ENCODE measurements at regions of chr5 and their contacts with region 1.

Region 1: DNA sequence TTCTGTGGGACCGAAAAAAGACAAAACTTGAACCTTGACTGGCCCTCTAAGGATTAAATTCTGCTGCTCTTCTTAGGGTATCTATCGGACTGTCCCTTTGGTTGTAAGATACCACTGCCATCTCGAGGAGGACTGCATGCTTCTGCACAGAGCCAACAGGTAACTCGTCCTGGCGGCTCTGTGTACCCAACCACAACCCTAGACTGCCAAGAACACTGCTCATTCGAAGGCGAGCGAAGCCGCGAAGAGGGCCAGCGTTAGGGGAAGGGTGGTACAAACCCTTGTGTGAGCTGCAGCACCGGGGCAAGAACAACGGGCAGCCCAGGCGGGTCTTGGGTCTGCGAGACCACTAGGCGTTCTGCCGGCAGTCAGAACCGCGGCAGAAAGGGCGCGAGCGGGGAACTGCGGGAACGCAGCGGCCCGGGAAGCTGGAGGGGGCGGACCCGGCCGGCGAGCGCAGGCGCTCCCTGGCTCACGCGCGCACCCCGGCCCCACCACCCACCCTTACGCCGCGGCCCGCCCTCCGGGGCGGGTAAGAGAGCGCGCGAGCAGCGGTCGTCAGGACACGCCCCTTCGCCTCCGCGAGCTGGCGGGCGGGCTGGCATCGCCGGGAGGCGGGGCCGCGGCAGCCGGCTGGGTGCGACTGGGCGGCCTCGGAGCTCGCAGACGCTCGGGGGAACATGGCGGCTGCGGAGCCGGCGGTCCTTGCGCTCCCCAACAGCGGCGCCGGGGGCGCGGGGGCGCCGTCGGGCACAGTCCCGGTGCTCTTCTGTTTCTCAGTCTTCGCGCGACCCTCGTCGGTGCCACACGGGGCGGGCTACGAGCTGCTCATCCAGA is at the start of gene ISOC1:
- DNase-seq: peak; percentile 88 to 95 (median 93)
- H3K4me3 ChIP-seq: peak within 1 kb of the TSS; percentile 69 to 83
- H3K4me3 Mint-ChIP-seq: peak within 1 kb of the TSS; percentile 89 to 94 (median 92)
- H3K27ac ChIP-seq: peak within 1 kb of the TSS; percentile 65
- H3K27ac Mint-ChIP-seq: peak within 1 kb of the TSS; percentile 85 to 93 (median 92)
- H3K4me1 ChIP-seq: peaks cover 41% of the 10 kb centered on the region
- H3K4me1 Mint-ChIP-seq: peaks cover 22 to 39% (median 30%) of the 10 kb centered on the region in 4 donors
- H3K27me3 ChIP-seq: no peaks in the 10 kb centered on the region
- H3K27me3 Mint-ChIP-seq: peaks cover 0 to 5% of the 10 kb centered on the region in 2 donors
- total RNA-seq, gene ISOC1: 13.7 to 16.6 TPM

Region 2: DNA sequence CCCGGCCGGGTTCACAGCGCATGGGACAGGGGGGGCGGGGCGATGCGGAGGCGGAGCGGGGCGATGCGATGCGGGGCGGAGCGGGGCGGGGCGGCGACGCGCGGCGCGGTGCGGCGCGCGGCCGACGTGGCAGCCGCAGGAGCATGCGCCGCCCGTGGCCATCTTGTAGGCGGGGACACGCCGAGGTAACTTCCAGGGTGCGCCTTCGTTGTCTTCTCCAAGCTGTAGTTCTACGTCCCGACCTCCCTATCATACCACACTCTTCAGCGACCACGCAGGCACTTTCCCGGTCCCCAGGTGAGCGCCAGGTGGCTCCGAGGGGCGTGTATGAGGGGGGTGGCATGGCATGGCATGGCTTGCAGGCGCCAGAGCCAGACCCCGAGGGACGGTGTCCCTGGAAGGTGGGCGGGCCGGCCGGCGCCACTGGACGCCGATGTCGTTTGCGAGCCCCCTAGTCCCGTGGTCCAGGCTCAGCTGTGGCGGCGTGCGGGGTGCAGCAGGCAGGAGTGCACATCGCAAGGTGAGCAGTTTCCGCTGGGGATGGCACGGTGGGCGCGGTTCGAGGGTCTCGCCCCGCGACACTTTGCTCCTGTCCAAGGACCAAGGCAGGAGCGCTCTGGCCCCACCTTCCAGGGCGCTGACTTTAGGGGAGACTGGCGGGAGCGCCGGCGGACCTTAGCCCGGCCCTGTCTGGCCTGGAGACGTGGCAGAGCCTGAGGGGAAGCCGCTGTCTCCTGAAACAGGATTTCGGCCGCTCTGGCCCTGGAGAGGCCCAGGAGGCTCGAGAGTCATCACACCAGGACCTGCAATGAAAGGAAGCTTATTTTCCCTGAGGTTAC is 1576.6 kb before region 1 on chr5 and contains the start of gene PRRC1:
- CTCF ChIA-PET with region 1: no interaction called
- POLR2A ChIA-PET with region 1: interaction called, 3 read pairs
- intact Hi-C with region 1: loop called (anchors 5 kb)
- DNase-seq: peak; percentile 74 to 83 (median 76)
- H3K4me3 ChIP-seq: peak within 1 kb of the TSS; percentile 79 to 97
- H3K4me3 Mint-ChIP-seq: peak within 1 kb of the TSS; percentile 87 to 93 (median 90)
- H3K27ac ChIP-seq: peak within 1 kb of the TSS; percentile 87
- H3K27ac Mint-ChIP-seq: peak within 1 kb of the TSS; percentile 70 to 93 (median 88)
- H3K4me1 ChIP-seq: peaks cover 25% of the 10 kb centered on the region
- H3K4me1 Mint-ChIP-seq: peaks cover 26 to 45% (median 34%) of the 10 kb centered on the region in 4 donors
- H3K27me3 ChIP-seq: peaks cover under 1% of the 10 kb centered on the region
- H3K27me3 Mint-ChIP-seq: peaks cover 4% of the 10 kb centered on the region in 2 donors
- total RNA-seq, gene PRRC1: 57.0 to 59.9 TPM

Region 3: GRCh38 chr5:129125810-129126209 is 31.5 kb after region 1 on chr5:
- CTCF ChIA-PET with region 1: interaction called, 44 read pairs
- POLR2A ChIA-PET with region 1: interaction called, 16 read pairs
- intact Hi-C with region 1: no loop called
- DNase-seq: peak in 4 of 5 donors; percentile 8 to 29 (median 10)
- H3K4me3 ChIP-seq: peak overlapping the region in 1 of 2 donors; percentile 16
- H3K4me3 Mint-ChIP-seq: peak overlapping the region; percentile 69 to 90 (median 78)
- H3K27ac ChIP-seq: peak overlapping the region; percentile 35
- H3K27ac Mint-ChIP-seq: peak overlapping the region; percentile 69 to 96 (median 92)
- H3K4me1 ChIP-seq: peaks cover 12% of the 10 kb centered on the region
- H3K4me1 Mint-ChIP-seq: peaks cover 8 to 13% (median 10%) of the 10 kb centered on the region in 4 donors
- H3K27me3 ChIP-seq: no peaks in the 10 kb centered on the region
- H3K27me3 Mint-ChIP-seq: no peaks in the 10 kb centered on the region

Measured in CD4-positive, alpha-beta memory T cell (primary cell).